Activated B cell treated with CpG ODN at 0.5 μM for 24 hours (primary cell): ENCODE measurements at regions of chr10 and their contacts with region 1.

Region 1: DNA sequence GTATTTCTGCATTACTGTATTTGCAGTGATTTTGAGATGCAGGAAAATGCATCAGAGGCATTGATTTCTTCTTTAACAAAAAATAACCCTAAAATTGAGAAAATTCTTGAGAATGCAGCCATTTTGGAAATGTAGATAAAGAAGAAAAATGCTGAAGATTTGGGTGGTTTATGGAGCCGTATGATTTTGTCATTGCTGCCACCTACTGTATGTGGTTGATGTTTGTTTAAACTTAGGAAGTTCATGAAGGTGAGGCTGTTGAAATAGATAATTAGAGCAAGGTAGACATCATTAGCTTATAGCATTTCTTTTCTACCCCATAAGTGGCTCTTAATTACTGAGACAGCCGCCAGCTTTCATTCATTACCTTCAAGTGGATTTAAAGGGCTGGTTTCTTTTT is 92.1 kb upstream of the SAMD8 start:
- DNase-seq: no peak
- ATAC-seq: peak; percentile 41
- H3K4me3 Mint-ChIP-seq: no peak overlapping the region
- H3K27ac Mint-ChIP-seq: no peak overlapping the region
- H3K4me1 Mint-ChIP-seq: peaks cover 13% of the 10 kb centered on the region
- H3K27me3 Mint-ChIP-seq: no peaks in the 10 kb centered on the region
- CTCF ChIP-seq: no peak

Region 2: DNA sequence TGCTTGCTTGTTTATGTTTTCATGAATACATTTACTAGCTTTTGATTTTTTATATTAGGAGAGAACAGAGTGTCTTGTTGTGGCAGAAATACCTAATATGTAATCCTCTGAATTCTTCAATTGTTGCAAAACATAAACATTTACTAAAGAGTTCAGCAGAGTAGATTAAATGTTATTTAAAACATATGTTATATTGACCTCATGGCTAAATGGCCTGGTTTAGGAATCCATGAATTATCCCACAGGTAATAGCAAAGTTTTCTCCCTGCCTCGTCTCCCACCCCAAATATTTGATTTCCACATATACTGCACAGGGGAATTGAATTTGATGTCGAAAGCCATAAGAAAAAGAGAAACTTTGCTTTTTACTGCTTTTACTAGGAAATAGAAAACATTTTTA is 756.5 kb before region 1 on chr10:
- CTCF ChIA-PET with region 1: interaction called, 25 read pairs
- POLR2A ChIA-PET with region 1: no interaction called
- intact Hi-C with region 1: loop called (anchors 1 kb)
- DNase-seq: no peak
- ATAC-seq: no peak
- H3K4me3 Mint-ChIP-seq: no peak overlapping the region
- H3K27ac Mint-ChIP-seq: no peak overlapping the region
- H3K4me1 Mint-ChIP-seq: peaks cover 15% of the 10 kb centered on the region
- H3K27me3 Mint-ChIP-seq: no peaks in the 10 kb centered on the region
- CTCF ChIP-seq: no peak

Region 3: DNA sequence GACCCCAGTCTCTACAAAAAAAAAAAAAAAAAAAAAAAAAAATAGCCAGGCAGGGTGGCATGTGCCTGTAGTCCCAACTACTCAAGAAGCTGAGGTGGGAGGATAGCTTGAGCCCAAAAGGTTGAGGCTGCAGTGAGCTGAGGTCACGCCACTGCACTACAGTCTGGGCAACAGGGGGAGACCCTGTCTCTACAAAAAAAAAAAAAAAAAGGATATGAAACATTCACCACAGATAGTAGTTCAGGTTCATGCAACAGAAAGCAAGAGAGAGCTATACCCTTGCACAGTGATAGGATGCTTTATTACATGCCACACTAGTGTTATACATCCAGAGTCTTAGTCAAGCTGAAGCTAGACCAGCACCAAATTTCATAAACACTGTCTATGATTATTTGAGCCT is 341.4 kb before region 1 on chr10:
- CTCF ChIA-PET with region 1: interaction called, 6 read pairs
- POLR2A ChIA-PET with region 1: no interaction called
- intact Hi-C with region 1: loop called (anchors 2 kb)
- DNase-seq: no peak
- ATAC-seq: peak; percentile 92
- H3K4me3 Mint-ChIP-seq: no peak overlapping the region
- H3K27ac Mint-ChIP-seq: no peak overlapping the region
- H3K4me1 Mint-ChIP-seq: peaks cover 35% of the 10 kb centered on the region
- H3K27me3 Mint-ChIP-seq: no peaks in the 10 kb centered on the region
- CTCF ChIP-seq: no peak

Region 4: GRCh38 chr10:74750848-74751274 is 268.5 kb before region 1 on chr10:
- CTCF ChIA-PET with region 1: no interaction called
- POLR2A ChIA-PET with region 1: no interaction called
- intact Hi-C with region 1: loop called (anchors 2 kb)
- DNase-seq: no peak
- ATAC-seq: peak; percentile 60
- H3K4me3 Mint-ChIP-seq: no peak overlapping the region
- H3K27ac Mint-ChIP-seq: no peak overlapping the region
- H3K4me1 Mint-ChIP-seq: peaks cover 9% of the 10 kb centered on the region
- H3K27me3 Mint-ChIP-seq: no peaks in the 10 kb centered on the region
- CTCF ChIP-seq: no peak

Region 5: DNA sequence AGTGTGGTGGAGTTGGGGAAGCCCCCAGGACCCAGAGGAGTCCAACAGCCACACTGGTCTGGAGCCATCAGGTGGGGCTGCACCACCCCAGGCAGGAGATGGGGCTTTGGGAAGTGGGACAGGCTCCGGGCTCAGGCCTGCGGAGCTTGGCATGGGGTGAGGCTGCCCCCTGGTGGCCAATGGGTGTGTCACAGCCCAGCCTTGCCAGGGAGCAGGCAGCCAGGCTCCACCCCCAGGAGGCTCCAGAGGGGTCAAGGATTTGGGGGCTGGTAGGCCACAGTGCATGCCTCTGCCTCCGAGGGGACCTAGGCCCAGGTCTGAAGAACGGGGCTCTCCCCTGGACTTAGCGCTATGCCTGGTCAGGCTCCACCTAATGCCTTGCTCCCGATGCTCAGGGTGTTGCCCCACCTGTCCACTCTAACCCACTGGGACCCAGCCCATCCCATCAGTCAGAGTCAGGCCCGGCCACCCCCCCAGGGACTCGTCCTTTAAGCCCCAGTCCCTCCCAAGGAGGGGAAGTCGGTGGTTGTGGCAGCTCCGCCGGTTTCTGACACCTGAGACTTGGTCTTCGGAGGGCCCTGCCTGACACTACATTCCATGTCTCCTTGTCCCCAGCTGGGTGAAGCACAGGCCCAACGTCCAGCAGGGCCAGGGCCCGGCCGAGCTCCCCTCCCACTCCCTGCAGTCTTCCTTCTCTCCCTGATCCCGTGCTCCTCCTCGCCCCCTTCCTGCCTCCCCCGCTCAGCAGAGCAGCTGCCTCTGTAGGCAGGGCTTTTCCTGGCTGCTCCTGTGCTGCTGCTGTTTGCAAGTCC is 80.8 kb after region 1 on chr10:
- CTCF ChIA-PET with region 1: interaction called, 3 read pairs
- POLR2A ChIA-PET with region 1: no interaction called
- intact Hi-C with region 1: loop called (anchors 2 kb)
- DNase-seq: peak; percentile 79
- ATAC-seq: peak; percentile 99
- H3K4me3 Mint-ChIP-seq: no peak overlapping the region
- H3K27ac Mint-ChIP-seq: no peak overlapping the region
- H3K4me1 Mint-ChIP-seq: peaks cover 1% of the 10 kb centered on the region
- H3K27me3 Mint-ChIP-seq: no peaks in the 10 kb centered on the region
- CTCF ChIP-seq: peak; percentile 92